Thyroid gland (tissue), 4 donors: ENCODE measurements at regions of chr6 and their contacts with region 1.

Region 1: DNA sequence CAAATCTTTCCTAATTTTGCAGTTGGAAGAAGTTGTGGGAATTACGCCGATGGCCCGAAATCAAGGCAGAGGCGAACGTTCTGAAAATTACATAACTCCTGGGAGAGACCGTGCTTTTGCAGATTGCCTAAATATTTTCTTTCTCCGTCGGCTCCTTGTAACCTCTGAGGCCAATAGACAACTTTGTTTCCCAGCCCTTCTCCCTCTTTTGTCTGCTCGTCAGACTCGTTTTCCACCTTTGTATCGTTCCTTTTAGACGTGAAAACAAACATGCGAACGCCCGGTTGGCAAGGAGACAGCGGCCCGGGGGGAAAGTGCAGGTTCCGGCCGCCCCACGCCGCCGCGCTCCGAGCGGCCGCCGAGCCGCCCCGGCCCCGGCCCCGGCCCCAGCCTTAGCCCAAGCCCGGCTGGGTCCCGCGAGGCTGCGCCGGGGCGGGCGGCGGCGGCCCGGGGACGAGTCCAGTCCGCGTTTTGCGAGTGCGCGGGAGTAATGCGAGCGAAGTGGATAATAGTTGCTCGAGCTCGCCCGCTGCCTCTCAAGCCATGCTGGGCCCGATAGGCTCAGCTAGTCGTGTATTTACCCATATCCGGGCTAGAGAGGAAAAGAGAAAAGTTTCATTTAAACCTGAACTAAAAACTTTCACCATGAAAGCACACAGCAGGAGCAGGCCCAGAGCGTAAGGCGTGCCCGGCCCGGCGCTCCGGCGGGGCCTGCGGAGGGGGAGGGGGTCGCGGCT is at the start of gene ARID1B:
- DNase-seq: peak; percentile 89 to 90
- H3K4me3 ChIP-seq: peak within 1 kb of the TSS; percentile 83 to 92 (median 85)
- H3K27ac ChIP-seq: peak within 1 kb of the TSS; percentile 98 to 99 (median 98)
- H3K4me1 ChIP-seq: peaks cover 18 to 26% of the 10 kb centered on the region in 2 donors
- H3K27me3 ChIP-seq: no peaks in the 10 kb centered on the region
- CTCF ChIP-seq: no peak
- POLR2A ChIP-seq: peak in 1 of 2 donors; percentile 67
- total RNA-seq, gene ARID1B: 157 to 315 (median 206) TPM

Region 2: GRCh38 chr6:156686995-156687788 is 89.8 kb before region 1 on chr6:
- intact Hi-C with region 1: loop called (anchors 5 kb)
- DNase-seq: peak; percentile 96 to 97
- H3K4me3 ChIP-seq: peak overlapping the region; percentile 41 to 73 (median 50)
- H3K27ac ChIP-seq: peak overlapping the region; percentile 97 to 99 (median 99)
- H3K4me1 ChIP-seq: peaks cover 5 to 10% of the 10 kb centered on the region in 2 donors
- H3K27me3 ChIP-seq: no peaks in the 10 kb centered on the region
- CTCF ChIP-seq: peak in 1 of 6 experiments; percentile 2
- POLR2A ChIP-seq: peak; percentile 60 to 78

Region 3: GRCh38 chr6:157169656-157170055 is 392.6 kb after region 1 on chr6:
- intact Hi-C with region 1: loop called (anchors 10 kb)
- DNase-seq: no peak
- H3K4me3 ChIP-seq: no peak overlapping the region
- H3K27ac ChIP-seq: no peak overlapping the region
- H3K4me1 ChIP-seq: peaks cover 0 to 2% of the 10 kb centered on the region in 2 donors
- H3K27me3 ChIP-seq: no peaks in the 10 kb centered on the region
- CTCF ChIP-seq: no peak
- POLR2A ChIP-seq: no peak

Region 4: GRCh38 chr6:157274471-157275226 is 497.6 kb after region 1 on chr6:
- intact Hi-C with region 1: loop called (anchors 10 kb)
- DNase-seq: peak; percentile 73 to 77
- H3K4me3 ChIP-seq: peak overlapping the region; percentile 29 to 64 (median 37)
- H3K27ac ChIP-seq: peak overlapping the region; percentile 73 to 77 (median 76)
- H3K4me1 ChIP-seq: peaks cover 0 to 8% of the 10 kb centered on the region in 2 donors
- H3K27me3 ChIP-seq: no peaks in the 10 kb centered on the region
- CTCF ChIP-seq: peak in 5 of 6 experiments; percentile 22 to 98 (median 95)
- POLR2A ChIP-seq: peak in 1 of 2 donors; percentile 51